ENCODE measurements at regions of chr15 and their contacts with region 1.

Region 1: GRCh38 chr15:41022487-41023090 is 69.3 kb downstream of the CHAC1 start:
- DNase-seq: peak; percentile 64
- ATAC-seq: peak; percentile 63
- H3K4me3 ChIP-seq: no peak overlapping the region
- H3K4me3 Mint-ChIP-seq: no peak overlapping the region
- H3K27ac ChIP-seq: no peak overlapping the region
- H3K27ac Mint-ChIP-seq: no peak overlapping the region
- H3K4me1 ChIP-seq: no peaks in the 10 kb centered on the region
- H3K4me1 Mint-ChIP-seq: no peaks in the 10 kb centered on the region
- H3K27me3 ChIP-seq: no peaks in the 10 kb centered on the region
- H3K27me3 Mint-ChIP-seq: no peaks in the 10 kb centered on the region
- CTCF ChIP-seq: peak; percentile 74

Region 2: DNA sequence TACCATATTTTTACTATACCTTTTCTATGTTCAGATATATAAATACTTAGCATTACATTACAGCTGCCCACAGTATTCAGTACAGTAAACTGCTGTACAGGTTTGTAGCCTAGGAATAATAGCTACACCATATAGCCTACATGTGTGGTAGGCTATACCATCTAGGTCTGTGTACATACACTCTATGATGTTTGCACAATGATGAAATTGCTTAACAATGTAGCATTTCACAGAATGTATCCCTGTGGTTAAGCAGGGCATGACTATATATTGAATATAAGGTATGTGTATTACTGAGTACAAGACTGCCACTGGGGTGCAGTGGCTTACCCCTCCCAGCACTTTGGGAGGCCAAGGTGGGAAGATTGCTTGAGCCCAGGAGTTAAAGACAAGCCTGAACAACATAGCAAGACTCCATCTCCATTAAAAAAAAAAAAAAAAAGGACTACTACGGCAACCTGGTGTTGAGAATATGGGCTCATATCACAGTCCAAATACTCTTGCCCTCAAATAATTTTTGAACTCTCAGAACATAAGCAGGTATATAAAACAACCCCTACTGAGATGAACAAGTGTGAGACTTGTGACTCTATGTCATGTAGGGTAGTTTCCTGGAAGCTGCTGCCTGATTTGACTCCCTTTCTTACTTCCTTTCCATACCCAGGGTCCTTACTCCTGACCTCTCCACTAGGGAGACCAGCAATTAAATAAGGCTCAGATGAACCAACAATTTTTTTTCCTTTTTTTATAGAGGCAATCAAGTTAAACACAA is 198.8 kb before region 1 on chr15:
- CTCF ChIA-PET with region 1: no interaction called
- POLR2A ChIA-PET with region 1: no interaction called
- intact Hi-C with region 1: no loop called
- DNase-seq: no peak
- ATAC-seq: no peak
- H3K4me3 ChIP-seq: no peak overlapping the region
- H3K4me3 Mint-ChIP-seq: no peak overlapping the region
- H3K27ac ChIP-seq: no peak overlapping the region
- H3K27ac Mint-ChIP-seq: no peak overlapping the region
- H3K4me1 ChIP-seq: no peaks in the 10 kb centered on the region
- H3K4me1 Mint-ChIP-seq: no peaks in the 10 kb centered on the region
- H3K27me3 ChIP-seq: no peaks in the 10 kb centered on the region
- H3K27me3 Mint-ChIP-seq: no peaks in the 10 kb centered on the region
- CTCF ChIP-seq: no peak

Region 3: DNA sequence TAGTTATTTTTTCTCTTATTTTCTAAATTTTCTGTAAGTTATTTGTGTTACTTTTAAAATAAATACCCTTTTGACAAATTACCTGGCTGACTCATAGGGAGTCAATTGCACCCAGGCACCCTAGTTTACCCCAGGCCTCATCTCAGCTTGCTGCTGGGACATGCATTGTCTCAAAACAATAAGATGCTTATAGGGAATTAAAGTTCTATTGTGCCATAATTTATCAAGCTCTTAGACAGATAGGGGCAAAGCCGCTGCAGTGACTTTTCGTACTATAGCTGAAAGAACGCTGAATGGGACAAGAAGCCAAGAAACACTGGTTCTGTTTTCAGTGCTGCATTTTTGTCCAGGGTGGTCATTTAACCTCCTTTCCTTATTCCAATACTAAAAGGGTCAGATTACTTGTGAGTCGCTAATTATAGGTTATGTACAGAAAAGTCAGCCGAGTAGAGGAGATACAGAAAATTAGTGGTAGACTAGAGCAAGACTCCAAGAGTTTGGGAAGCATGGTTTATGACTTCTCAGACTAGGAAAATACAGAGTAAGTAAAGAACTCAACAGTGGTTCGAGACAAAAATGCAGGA is 157.7 kb after region 1 on chr15:
- CTCF ChIA-PET with region 1: interaction called, 7 read pairs
- POLR2A ChIA-PET with region 1: no interaction called
- intact Hi-C with region 1: loop called (anchors 10 kb)
- DNase-seq: no peak
- ATAC-seq: no peak
- H3K4me3 ChIP-seq: no peak overlapping the region
- H3K4me3 Mint-ChIP-seq: no peak overlapping the region
- H3K27ac ChIP-seq: no peak overlapping the region
- H3K27ac Mint-ChIP-seq: no peak overlapping the region
- H3K4me1 ChIP-seq: no peaks in the 10 kb centered on the region
- H3K4me1 Mint-ChIP-seq: peaks cover 3% of the 10 kb centered on the region
- H3K27me3 ChIP-seq: no peaks in the 10 kb centered on the region
- H3K27me3 Mint-ChIP-seq: peaks cover 3% of the 10 kb centered on the region
- CTCF ChIP-seq: no peak

Region 4: DNA sequence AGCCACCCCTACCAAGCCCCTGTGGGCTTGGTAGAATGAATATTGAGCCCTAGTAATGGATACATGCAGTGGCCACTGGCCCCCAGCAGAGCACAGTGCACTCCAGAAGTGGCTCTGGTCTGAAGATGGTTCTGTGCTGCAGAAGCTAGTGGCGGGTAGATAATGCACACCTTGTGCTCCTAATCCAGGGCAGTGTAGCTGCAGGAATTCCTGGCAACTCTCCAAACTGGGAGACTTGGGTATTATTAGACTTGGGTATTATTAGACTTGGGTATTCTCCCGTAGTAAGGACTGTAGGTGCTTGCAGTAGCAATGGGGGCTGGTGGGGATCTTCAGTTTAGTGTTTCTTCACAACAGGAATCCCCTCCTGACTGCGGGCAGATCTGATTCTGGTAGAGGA is 344.8 kb after region 1 on chr15:
- CTCF ChIA-PET with region 1: no interaction called
- POLR2A ChIA-PET with region 1: no interaction called
- intact Hi-C with region 1: no loop called
- DNase-seq: no peak
- ATAC-seq: no peak
- H3K4me3 ChIP-seq: no peak overlapping the region
- H3K4me3 Mint-ChIP-seq: no peak overlapping the region
- H3K27ac ChIP-seq: no peak overlapping the region
- H3K27ac Mint-ChIP-seq: no peak overlapping the region
- H3K4me1 ChIP-seq: no peaks in the 10 kb centered on the region
- H3K4me1 Mint-ChIP-seq: no peaks in the 10 kb centered on the region
- H3K27me3 ChIP-seq: no peaks in the 10 kb centered on the region
- H3K27me3 Mint-ChIP-seq: no peaks in the 10 kb centered on the region
- CTCF ChIP-seq: no peak

Measured in B cell (primary cell).